Caco-2 (cell line): ENCODE measurements at regions of chr1 and their contacts with region 1.

Region 1: DNA sequence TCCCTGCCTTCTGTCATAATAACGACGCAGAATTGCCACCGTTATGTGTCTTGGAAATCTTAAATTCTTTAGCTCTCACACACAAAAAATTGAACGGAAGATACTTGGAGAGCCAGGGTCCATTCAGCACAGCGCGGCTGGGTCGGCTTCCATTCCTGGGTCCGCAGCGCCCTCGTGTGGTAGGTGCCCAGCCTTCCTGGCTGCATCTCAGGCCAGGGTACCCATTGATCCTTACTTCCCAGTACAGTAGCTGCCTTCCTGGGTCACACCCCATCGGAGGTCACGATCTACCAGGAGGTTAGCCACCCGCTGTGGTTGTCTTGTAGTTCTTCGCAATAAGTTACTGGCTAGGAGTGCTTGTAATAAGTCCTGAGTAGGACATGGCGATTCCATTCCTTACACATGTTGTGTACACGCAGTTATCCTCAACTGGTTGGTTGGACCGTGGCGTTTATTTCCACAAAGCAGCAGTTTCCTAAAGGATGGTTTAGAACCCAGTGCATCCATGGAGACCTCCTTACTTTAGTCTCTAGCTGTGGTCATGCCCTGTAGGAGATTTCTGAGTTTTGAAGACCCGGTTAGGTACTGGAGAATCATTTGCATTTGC is 9.9 kb upstream of the MTARC1 start:
- DNase-seq: peak; percentile 80 to 89
- H3K4me3 ChIP-seq: no peak overlapping the region
- H3K4me3 Mint-ChIP-seq: no peak overlapping the region
- H3K27ac Mint-ChIP-seq: no peak overlapping the region
- H3K4me1 ChIP-seq: no peaks in the 10 kb centered on the region
- H3K4me1 Mint-ChIP-seq: no peaks in the 10 kb centered on the region
- H3K27me3 ChIP-seq: no peaks in the 10 kb centered on the region
- H3K27me3 Mint-ChIP-seq: no peaks in the 10 kb centered on the region
- CTCF ChIP-seq: peak; percentile 96 to 97

Region 2: GRCh38 chr1:220281159-220281574 is 495.7 kb before region 1 on chr1:
- CTCF ChIA-PET with region 1: interaction called, 6 read pairs
- POLR2A ChIA-PET with region 1: no interaction called
- intact Hi-C with region 1: loop called (anchors 1 kb)
- DNase-seq: peak in 1 of 2 experiments; percentile 34
- H3K4me3 ChIP-seq: no peak overlapping the region
- H3K4me3 Mint-ChIP-seq: no peak overlapping the region
- H3K27ac Mint-ChIP-seq: no peak overlapping the region
- H3K4me1 ChIP-seq: no peaks in the 10 kb centered on the region
- H3K4me1 Mint-ChIP-seq: no peaks in the 10 kb centered on the region
- H3K27me3 ChIP-seq: no peaks in the 10 kb centered on the region
- H3K27me3 Mint-ChIP-seq: peaks cover 12% of the 10 kb centered on the region
- CTCF ChIP-seq: peak; percentile 63 to 68

Region 3: DNA sequence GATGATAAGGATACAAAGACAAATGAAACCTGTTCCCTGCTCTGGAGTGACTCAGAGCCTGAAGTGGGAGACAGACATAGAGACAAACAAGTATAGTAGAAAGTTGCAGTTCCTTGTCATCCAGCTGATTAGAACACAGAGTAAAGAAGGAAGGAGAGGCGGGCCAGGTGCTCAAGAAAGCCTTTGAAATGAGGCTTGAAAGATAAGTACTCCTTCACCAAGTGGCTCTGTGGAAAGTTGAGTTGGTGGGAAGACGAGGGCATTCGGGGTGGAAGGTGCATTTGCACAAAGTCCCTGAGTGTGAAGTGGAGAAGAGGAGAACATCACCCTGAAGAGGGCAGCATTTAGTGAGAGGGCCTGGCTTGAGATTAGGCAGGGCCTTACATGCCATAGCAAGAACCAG is 231.9 kb before region 1 on chr1:
- CTCF ChIA-PET with region 1: no interaction called
- POLR2A ChIA-PET with region 1: no interaction called
- intact Hi-C with region 1: loop called (anchors 1 kb)
- DNase-seq: peak in 1 of 2 experiments; percentile 20
- H3K4me3 ChIP-seq: no peak overlapping the region
- H3K4me3 Mint-ChIP-seq: no peak overlapping the region
- H3K27ac Mint-ChIP-seq: no peak overlapping the region
- H3K4me1 ChIP-seq: no peaks in the 10 kb centered on the region
- H3K4me1 Mint-ChIP-seq: no peaks in the 10 kb centered on the region
- H3K27me3 ChIP-seq: no peaks in the 10 kb centered on the region
- H3K27me3 Mint-ChIP-seq: peaks cover 9% of the 10 kb centered on the region
- CTCF ChIP-seq: peak in 1 of 2 experiments; percentile 37

Region 4: DNA sequence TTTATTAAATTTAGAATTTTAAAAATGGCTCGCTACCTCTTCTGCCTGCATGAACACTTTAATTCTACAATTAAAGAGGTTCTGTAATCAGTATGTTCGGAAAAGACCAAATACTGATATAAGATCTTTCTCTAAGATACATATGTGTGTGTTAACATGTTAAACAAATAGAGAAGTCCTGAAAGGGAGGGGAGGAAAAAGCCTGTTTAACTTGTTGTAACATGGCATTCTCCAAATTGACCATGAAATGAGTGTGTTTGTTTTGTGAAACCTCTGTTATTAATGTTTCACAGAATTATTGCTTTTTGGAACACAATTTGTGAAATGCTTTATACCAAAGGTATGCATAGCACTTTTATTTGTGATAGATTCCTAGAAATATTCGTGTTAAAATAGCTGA is 171.9 kb before region 1 on chr1:
- CTCF ChIA-PET with region 1: no interaction called
- POLR2A ChIA-PET with region 1: no interaction called
- intact Hi-C with region 1: no loop called
- DNase-seq: no peak
- H3K4me3 ChIP-seq: no peak overlapping the region
- H3K4me3 Mint-ChIP-seq: no peak overlapping the region
- H3K27ac Mint-ChIP-seq: no peak overlapping the region
- H3K4me1 ChIP-seq: no peaks in the 10 kb centered on the region
- H3K4me1 Mint-ChIP-seq: no peaks in the 10 kb centered on the region
- H3K27me3 ChIP-seq: no peaks in the 10 kb centered on the region
- H3K27me3 Mint-ChIP-seq: peaks cover 5% of the 10 kb centered on the region
- CTCF ChIP-seq: no peak

Region 5: GRCh38 chr1:220690140-220691025 is 86.4 kb before region 1 on chr1 and contains the start of gene C1orf115:
- CTCF ChIA-PET with region 1: interaction called, 11 read pairs
- POLR2A ChIA-PET with region 1: no interaction called
- intact Hi-C with region 1: loop called (anchors 1 kb)
- DNase-seq: peak; percentile 80 to 95
- H3K4me3 ChIP-seq: peak within 1 kb of the TSS; percentile 94
- H3K4me3 Mint-ChIP-seq: peak within 1 kb of the TSS; percentile 94
- H3K27ac Mint-ChIP-seq: peak within 1 kb of the TSS; percentile 82
- H3K4me1 ChIP-seq: peaks cover 8% of the 10 kb centered on the region; the same call in 1 of the 2 replicates
- H3K4me1 Mint-ChIP-seq: no peaks in the 10 kb centered on the region
- H3K27me3 ChIP-seq: no peaks in the 10 kb centered on the region
- H3K27me3 Mint-ChIP-seq: no peaks in the 10 kb centered on the region
- CTCF ChIP-seq: peak; percentile 95 to 98
- total RNA-seq, gene C1orf115: 26.5 and 33.9 TPM in 2 replicates

Region 6: GRCh38 chr1:220717800-220718640 is 58.8 kb before region 1 on chr1:
- CTCF ChIA-PET with region 1: no interaction called
- POLR2A ChIA-PET with region 1: no interaction called
- intact Hi-C with region 1: no loop called
- DNase-seq: no peak
- H3K4me3 ChIP-seq: no peak overlapping the region
- H3K4me3 Mint-ChIP-seq: no peak overlapping the region
- H3K27ac Mint-ChIP-seq: no peak overlapping the region
- H3K4me1 ChIP-seq: no peaks in the 10 kb centered on the region
- H3K4me1 Mint-ChIP-seq: no peaks in the 10 kb centered on the region
- H3K27me3 ChIP-seq: no peaks in the 10 kb centered on the region
- H3K27me3 Mint-ChIP-seq: no peaks in the 10 kb centered on the region
- CTCF ChIP-seq: no peak

Region 7: DNA sequence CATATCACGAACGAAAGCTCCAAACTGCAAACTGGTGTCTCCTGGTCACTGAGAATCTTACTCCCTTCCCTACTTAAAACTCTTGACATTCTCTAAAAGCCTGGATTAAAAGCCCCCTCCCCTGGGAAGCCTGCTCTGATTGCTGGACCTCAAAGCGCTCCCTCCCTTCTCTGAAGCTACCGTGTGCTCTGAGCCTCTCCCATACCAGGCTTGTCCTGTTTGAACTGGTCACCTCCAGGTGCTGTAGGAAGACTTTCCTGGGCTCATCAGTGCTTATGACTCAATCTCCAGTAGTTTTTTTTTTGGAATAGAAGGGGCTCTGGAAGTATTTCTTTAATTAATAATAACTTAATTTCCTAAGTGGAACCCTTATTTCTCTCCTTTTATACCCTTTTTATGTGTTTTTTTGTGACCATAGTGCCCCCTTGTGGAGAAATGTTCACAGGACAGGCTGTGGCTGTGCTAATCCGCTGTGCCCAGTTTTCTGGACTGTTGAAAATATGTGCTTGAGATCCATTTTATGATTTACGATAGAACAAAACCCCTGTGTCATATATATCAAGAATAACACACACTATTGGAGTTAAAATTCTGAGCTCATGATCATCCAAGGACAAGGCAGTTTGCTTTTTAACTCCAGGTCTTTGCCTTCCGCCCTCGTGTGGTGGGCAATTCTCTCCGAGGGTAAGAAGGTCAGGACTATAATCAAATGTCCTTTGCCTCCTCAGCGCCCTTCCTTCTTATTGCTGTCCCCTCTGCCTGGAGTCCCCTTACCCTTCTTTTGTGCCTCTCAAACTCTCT is 26.8 kb after region 1 on chr1:
- CTCF ChIA-PET with region 1: interaction called, 3 read pairs
- POLR2A ChIA-PET with region 1: no interaction called
- intact Hi-C with region 1: loop called (anchors 1 kb)
- DNase-seq: peak in 1 of 2 experiments; percentile 47
- H3K4me3 ChIP-seq: no peak overlapping the region
- H3K4me3 Mint-ChIP-seq: no peak overlapping the region
- H3K27ac Mint-ChIP-seq: peak overlapping the region; percentile 11
- H3K4me1 ChIP-seq: no peaks in the 10 kb centered on the region
- H3K4me1 Mint-ChIP-seq: no peaks in the 10 kb centered on the region
- H3K27me3 ChIP-seq: no peaks in the 10 kb centered on the region
- H3K27me3 Mint-ChIP-seq: no peaks in the 10 kb centered on the region
- CTCF ChIP-seq: peak; percentile 81 to 87

Region 8: GRCh38 chr1:220894025-220894923 is 117.5 kb after region 1 on chr1:
- CTCF ChIA-PET with region 1: no interaction called
- POLR2A ChIA-PET with region 1: no interaction called
- intact Hi-C with region 1: no loop called
- DNase-seq: no peak
- H3K4me3 ChIP-seq: no peak overlapping the region
- H3K4me3 Mint-ChIP-seq: no peak overlapping the region
- H3K27ac Mint-ChIP-seq: no peak overlapping the region
- H3K4me1 ChIP-seq: no peaks in the 10 kb centered on the region
- H3K4me1 Mint-ChIP-seq: no peaks in the 10 kb centered on the region
- H3K27me3 ChIP-seq: no peaks in the 10 kb centered on the region; the same call in 1 of the 2 replicates
- H3K27me3 Mint-ChIP-seq: peaks cover 17% of the 10 kb centered on the region
- CTCF ChIP-seq: no peak